ENCODE measurements at regions of chr19 and their contacts with region 1.

Region 1: GRCh38 chr19:58097781-58098681 is at the start of gene ZSCAN18:
- DNase-seq: peak; percentile 100
- ATAC-seq: peak; percentile 93
- H3K4me3 ChIP-seq: peak within 1 kb of the TSS; percentile 73 to 96 (median 92)
- H3K4me3 Mint-ChIP-seq: peak within 1 kb of the TSS; percentile 81
- H3K27ac ChIP-seq: peak within 1 kb of the TSS; percentile 98 to 100
- H3K27ac Mint-ChIP-seq: peak within 1 kb of the TSS; percentile 97
- H3K4me1 ChIP-seq: peaks cover 13 to 16% of the 10 kb centered on the region in 2 donors
- H3K4me1 Mint-ChIP-seq: peaks cover 18% of the 10 kb centered on the region
- H3K27me3 ChIP-seq: no peaks in the 10 kb centered on the region
- H3K27me3 Mint-ChIP-seq: peaks cover 3% of the 10 kb centered on the region
- CTCF ChIP-seq: no peak
- total RNA-seq, gene ZSCAN18: 84.9 and 90.5 TPM in 2 replicates

Region 2: DNA sequence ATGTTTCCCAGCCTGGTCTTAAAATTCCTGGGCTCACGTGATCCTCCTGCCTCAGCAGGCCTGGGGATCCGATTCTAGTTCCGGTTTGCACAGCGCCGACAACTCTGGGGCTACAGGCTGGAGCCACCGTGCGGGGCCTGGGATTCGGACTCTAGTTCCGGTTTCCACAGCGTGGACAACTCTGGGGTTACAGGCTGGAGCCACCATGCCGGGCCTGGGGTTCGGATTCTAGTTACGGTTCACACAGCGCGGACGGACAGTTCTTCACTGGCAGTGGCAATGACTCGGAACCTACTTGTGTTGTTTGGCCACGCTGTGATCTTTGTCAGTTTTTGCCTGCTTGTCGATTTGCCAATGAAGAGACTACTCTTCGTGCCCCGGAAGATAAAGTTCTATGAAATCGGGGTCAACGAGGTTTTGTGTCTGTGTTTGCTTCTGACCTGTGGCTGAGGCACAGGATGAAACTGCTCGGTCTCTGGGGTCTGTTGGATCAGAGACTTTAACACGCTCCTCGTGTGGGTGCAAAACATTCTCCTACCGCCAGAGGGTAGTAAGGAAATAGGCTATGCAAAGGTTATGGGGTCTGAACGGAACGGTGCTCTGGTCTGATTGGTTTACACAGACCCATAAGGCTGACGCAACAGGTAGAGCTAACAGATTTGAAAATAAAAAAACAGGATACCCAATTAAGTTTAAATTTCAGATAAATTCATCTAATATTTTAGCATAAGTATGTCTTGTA is 76.3 kb before region 1 on chr19:
- CTCF ChIA-PET with region 1: no interaction called
- POLR2A ChIA-PET with region 1: no interaction called
- intact Hi-C with region 1: loop called (anchors 5 kb)
- DNase-seq: peak; percentile 83
- ATAC-seq: peak; percentile 99
- H3K4me3 ChIP-seq: no peak overlapping the region
- H3K4me3 Mint-ChIP-seq: no peak overlapping the region
- H3K27ac ChIP-seq: no peak overlapping the region
- H3K27ac Mint-ChIP-seq: no peak overlapping the region
- H3K4me1 ChIP-seq: no peaks in the 10 kb centered on the region
- H3K4me1 Mint-ChIP-seq: peaks cover 3% of the 10 kb centered on the region
- H3K27me3 ChIP-seq: peaks cover 0 to 7% (median 0%) of the 10 kb centered on the region in 4 experiments
- H3K27me3 Mint-ChIP-seq: no peaks in the 10 kb centered on the region
- CTCF ChIP-seq: peak; percentile 59

Region 3: GRCh38 chr19:58059003-58059670 is 38.9 kb before region 1 on chr19 and contains the start of gene ZNF135:
- CTCF ChIA-PET with region 1: no interaction called
- POLR2A ChIA-PET with region 1: no interaction called
- intact Hi-C with region 1: loop called (anchors 1 kb)
- DNase-seq: peak; percentile 88
- ATAC-seq: peak; percentile 86
- H3K4me3 ChIP-seq: peak within 1 kb of the TSS; percentile 9 to 81 (median 64)
- H3K4me3 Mint-ChIP-seq: peak within 1 kb of the TSS; percentile 86
- H3K27ac ChIP-seq: peak within 1 kb of the TSS; percentile 87 to 92
- H3K27ac Mint-ChIP-seq: peak within 1 kb of the TSS; percentile 91
- H3K4me1 ChIP-seq: peaks cover 8 to 16% of the 10 kb centered on the region in 2 donors
- H3K4me1 Mint-ChIP-seq: peaks cover 14% of the 10 kb centered on the region
- H3K27me3 ChIP-seq: peaks cover 0 to 7% (median 2%) of the 10 kb centered on the region in 4 experiments
- H3K27me3 Mint-ChIP-seq: peaks cover 16% of the 10 kb centered on the region
- CTCF ChIP-seq: no peak
- total RNA-seq, gene ZNF135: 10.0 and 10.1 TPM in 2 replicates